ENCODE measurements at regions of chr18 and their contacts with region 1.

Region 1: DNA sequence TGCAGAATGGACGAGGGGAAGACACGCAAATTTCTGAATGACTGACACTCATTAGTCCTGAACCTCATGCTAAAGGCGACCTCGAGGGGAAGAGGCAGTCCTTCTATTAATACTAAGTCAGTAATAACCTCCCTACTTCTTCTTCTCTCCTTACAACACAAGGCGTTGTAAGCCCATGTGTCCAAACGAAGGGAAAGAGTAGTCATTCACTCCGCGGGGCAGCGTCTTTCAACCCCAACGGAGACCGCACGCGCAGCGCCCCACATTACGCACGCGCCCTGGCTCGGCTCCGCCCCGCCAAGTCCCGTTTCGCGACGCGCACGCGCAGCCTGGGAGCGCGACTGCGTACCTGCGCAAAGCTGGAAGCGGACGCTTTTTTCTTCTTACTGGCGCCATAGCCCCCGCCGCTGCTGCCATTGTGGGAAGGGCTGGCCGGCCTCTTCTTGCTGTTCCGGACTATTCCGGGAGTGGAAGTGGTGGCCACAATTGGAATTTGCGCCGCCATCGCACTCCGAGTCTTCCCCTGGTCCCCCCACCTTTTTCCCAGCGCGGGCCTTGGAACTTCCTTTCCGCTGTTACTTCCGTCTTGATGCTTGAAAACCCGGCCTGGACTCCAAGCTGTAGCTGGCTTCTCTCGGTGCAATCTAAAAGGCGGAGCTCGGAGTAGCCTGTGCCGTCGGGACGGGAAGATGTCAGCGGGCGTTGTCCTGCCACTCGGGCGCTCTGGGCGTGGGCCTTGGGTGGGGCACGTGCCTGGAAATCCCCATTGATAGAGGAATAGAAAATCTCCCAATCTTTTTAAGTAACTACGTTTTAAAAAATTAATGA is at the start of gene INO80C:
- DNase-seq: peak; percentile 93
- H3K4me3 Mint-ChIP-seq: peak within 1 kb of the TSS; percentile 96
- H3K27ac Mint-ChIP-seq: peak within 1 kb of the TSS; percentile 99
- H3K4me1 Mint-ChIP-seq: peaks cover 23% of the 10 kb centered on the region
- H3K27me3 Mint-ChIP-seq: no peaks in the 10 kb centered on the region
- total RNA-seq, gene INO80C: 34.4 to 36.6 TPM

Region 2: GRCh38 chr18:34867520-34867919 is 630.1 kb before region 1 on chr18:
- CTCF ChIA-PET with region 1: no interaction called
- intact Hi-C with region 1: loop called (anchors 5 kb)
- DNase-seq: no peak
- H3K4me3 Mint-ChIP-seq: no peak overlapping the region
- H3K27ac Mint-ChIP-seq: peak overlapping the region; percentile 53
- H3K4me1 Mint-ChIP-seq: peaks cover 51% of the 10 kb centered on the region
- H3K27me3 Mint-ChIP-seq: no peaks in the 10 kb centered on the region

Region 3: DNA sequence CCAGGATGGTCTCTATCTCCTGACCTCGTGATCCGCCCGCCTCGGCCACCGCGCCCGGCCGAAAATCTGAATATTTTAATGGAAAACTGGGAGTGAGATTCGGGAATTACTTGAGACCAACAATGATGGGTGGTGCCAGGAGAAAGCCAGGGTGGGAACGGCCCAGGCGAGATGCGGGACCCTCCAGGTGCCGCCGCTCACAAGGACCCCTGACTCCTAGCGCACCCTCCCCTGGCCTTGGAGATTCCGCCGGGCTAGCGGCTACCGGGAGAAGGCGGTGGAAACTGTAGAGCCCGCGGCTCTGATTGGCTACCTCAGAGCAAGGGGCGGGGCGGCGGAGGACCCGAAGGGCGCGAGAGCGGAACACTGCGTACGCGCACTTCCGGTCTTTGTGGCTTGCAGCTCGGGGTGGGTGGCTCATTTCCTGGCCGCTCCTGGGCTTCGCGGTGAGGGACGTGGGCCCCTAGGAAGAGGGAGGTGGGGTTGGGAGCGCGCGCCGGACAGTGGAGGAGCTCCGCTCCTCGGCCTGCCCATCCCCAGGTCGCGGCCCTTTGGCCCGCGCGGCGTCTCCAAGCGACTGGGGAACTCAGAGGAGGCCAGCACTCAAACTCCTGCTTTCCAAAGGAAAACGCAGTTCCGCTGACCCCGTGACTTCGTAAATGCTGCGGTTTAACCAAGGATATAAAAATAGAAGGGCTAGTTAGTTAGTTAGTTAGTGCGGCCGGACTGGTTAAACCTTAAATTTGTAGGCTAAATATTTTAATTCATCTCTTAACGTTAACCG is 256.7 kb before region 1 on chr18 and contains the start of gene ZNF397:
- CTCF ChIA-PET with region 1: no interaction called
- intact Hi-C with region 1: loop called (anchors 2 kb)
- DNase-seq: peak; percentile 98
- H3K4me3 Mint-ChIP-seq: peak within 1 kb of the TSS; percentile 94
- H3K27ac Mint-ChIP-seq: peak within 1 kb of the TSS; percentile 99
- H3K4me1 Mint-ChIP-seq: peaks cover 38% of the 10 kb centered on the region
- H3K27me3 Mint-ChIP-seq: no peaks in the 10 kb centered on the region
- total RNA-seq, gene ZNF397: 22.6 to 23.2 TPM

Region 4: DNA sequence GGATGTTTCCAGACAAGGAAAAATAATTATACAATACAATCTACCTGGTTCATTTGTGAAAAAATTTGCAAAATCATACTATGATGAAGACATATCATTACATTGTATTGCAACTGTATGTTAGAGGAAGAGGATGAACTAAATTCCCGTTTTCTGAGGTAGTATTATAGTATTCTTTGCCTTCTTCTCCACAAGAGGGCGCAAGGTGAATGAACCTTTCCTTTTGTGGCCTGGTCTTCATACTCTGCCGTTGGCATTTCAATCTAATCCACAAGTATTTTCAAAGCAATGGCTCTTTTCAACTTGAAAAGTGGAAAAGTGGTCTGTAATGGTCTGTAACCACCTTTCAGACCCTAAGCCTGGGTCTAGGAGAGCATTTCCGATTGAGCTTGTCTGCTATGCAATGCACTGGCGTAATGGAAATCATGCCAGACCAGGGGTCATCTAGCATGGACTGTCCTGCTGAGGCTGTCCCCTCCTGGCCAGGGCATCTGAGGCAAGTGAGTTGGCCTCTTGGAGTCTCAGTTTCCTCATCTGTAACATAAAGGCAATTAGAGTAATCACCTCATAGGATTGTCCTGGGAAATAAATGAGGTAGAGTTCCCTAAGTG is 89.6 kb before region 1 on chr18:
- CTCF ChIA-PET with region 1: interaction called, 4 read pairs
- intact Hi-C with region 1: loop called (anchors 1 kb)
- DNase-seq: peak; percentile 62
- H3K4me3 Mint-ChIP-seq: no peak overlapping the region
- H3K27ac Mint-ChIP-seq: no peak overlapping the region
- H3K4me1 Mint-ChIP-seq: peaks cover 17% of the 10 kb centered on the region
- H3K27me3 Mint-ChIP-seq: no peaks in the 10 kb centered on the region

Region 5: DNA sequence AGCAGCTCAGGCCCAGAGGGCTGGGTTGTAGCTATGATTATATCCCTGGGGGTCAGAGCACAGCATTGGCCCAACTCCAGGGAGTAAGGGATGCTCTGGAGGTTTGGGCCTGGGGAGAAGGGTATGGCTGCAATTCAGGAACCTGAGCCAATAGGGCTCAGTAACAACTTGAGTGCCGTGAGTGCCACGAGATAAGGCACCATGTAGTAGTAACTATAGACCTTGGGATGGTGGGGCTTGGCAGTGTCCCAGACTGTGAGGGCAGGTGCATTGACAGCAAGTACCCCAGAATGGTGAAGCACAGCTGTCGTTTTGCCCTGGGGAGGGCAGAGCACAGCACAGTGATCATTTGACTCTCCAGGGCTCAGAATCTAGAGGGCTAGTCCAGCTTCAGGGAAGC is 75.3 kb before region 1 on chr18:
- CTCF ChIA-PET with region 1: no interaction called
- intact Hi-C with region 1: no loop called
- DNase-seq: no peak
- H3K4me3 Mint-ChIP-seq: no peak overlapping the region
- H3K27ac Mint-ChIP-seq: no peak overlapping the region
- H3K4me1 Mint-ChIP-seq: no peaks in the 10 kb centered on the region
- H3K27me3 Mint-ChIP-seq: no peaks in the 10 kb centered on the region

Region 6: GRCh38 chr18:35484034-35484433 is 13.6 kb before region 1 on chr18:
- CTCF ChIA-PET with region 1: no interaction called
- intact Hi-C with region 1: loop called (anchors 1 kb)
- DNase-seq: no peak
- H3K4me3 Mint-ChIP-seq: no peak overlapping the region
- H3K27ac Mint-ChIP-seq: no peak overlapping the region
- H3K4me1 Mint-ChIP-seq: peaks cover 60% of the 10 kb centered on the region
- H3K27me3 Mint-ChIP-seq: no peaks in the 10 kb centered on the region

Region 7: DNA sequence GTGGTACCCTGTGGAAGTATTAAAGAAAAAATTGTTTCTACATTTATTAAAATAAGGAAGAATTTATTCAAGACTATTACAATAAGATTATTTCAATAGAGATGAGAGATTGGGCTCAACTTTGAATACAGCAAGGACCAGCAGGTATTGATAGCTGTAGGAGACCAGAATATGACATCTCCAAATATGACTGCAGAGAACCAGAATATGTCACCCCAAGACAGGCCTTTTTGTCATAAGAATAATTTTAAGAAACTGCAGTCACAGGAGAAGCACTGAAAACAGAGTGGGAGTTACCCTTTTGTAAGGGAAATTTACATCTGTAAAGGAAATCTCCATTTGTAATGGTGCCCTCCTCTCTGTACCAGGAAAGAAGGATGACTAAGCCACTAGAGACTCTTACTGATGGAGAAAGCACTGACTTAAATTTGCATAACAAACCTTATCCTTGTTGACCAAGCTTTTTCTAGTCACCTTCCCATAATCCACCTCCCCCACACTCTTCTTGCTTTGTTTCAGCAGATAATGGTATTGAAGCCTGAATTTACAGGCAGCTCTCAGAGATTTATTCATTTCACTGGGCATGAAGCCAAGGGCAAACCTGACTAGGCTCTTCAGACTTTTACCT is 329.8 kb after region 1 on chr18:
- CTCF ChIA-PET with region 1: no interaction called
- intact Hi-C with region 1: loop called (anchors 1 kb)
- DNase-seq: peak; percentile 62
- H3K4me3 Mint-ChIP-seq: no peak overlapping the region
- H3K27ac Mint-ChIP-seq: peak overlapping the region; percentile 75
- H3K4me1 Mint-ChIP-seq: peaks cover 15% of the 10 kb centered on the region
- H3K27me3 Mint-ChIP-seq: peaks cover 22% of the 10 kb centered on the region

Region 8: GRCh38 chr18:35964319-35964718 is 466.7 kb after region 1 on chr18:
- CTCF ChIA-PET with region 1: no interaction called
- intact Hi-C with region 1: no loop called
- DNase-seq: no peak
- H3K4me3 Mint-ChIP-seq: no peak overlapping the region
- H3K27ac Mint-ChIP-seq: peak overlapping the region; percentile 71
- H3K4me1 Mint-ChIP-seq: peaks cover 24% of the 10 kb centered on the region
- H3K27me3 Mint-ChIP-seq: no peaks in the 10 kb centered on the region

Region 9: DNA sequence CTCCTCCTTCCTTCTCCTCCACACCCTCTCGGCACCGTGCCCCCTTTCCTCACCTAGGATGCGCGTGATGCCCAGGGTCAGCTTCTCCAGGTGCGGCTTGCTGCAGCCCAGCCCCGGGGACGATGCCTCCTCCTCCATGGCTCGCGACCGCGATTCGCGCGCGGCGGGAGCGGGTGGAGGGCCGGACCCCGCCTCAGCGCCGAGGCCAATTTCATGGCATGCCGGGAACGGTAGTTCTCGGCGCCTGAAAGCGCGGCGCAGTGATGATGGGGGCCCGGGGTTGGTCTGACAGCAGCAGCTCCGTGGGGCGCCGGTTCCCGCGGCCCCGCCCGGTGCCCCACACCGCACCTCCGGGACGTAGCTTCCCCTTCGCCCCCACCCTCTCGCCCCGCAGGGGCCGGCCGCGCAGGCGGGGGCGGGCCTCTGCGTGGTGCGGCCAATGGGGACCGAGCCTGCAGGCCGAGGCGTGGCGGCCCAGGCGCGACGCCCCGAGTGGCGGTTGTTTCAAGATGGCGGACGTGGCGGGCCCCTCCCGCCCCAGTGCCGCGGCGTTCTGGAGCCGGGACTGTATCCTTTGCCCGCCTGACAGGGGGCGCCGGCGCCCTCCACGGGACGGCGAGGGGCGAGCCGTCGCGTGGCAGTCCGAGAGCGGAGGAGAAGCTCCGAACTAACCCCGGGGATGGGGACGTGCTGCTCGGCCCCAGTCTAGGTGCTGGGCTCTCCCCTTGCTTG is 1331.2 kb after region 1 on chr18 and contains the starts of genes KIAA1328 and TPGS2:
- CTCF ChIA-PET with region 1: no interaction called
- intact Hi-C with region 1: loop called (anchors 2 kb)
- DNase-seq: peak; percentile 88
- H3K4me3 Mint-ChIP-seq: peak within 1 kb of the TSS; percentile 82
- H3K27ac Mint-ChIP-seq: peak within 1 kb of the TSS; percentile 81
- H3K4me1 Mint-ChIP-seq: peaks cover 46% of the 10 kb centered on the region
- H3K27me3 Mint-ChIP-seq: no peaks in the 10 kb centered on the region
- total RNA-seq, gene KIAA1328: 7.2 to 7.8 TPM
- total RNA-seq, gene TPGS2: 71.5 to 73.4 TPM

Measured in activated naive CD4-positive, alpha-beta T cell treated with anti-CD3 and anti-CD28 coated beads for 36 hours (primary cell).